Caco-2 (cell line): ENCODE measurements at regions of chr14 and their contacts with region 1.

Region 1: DNA sequence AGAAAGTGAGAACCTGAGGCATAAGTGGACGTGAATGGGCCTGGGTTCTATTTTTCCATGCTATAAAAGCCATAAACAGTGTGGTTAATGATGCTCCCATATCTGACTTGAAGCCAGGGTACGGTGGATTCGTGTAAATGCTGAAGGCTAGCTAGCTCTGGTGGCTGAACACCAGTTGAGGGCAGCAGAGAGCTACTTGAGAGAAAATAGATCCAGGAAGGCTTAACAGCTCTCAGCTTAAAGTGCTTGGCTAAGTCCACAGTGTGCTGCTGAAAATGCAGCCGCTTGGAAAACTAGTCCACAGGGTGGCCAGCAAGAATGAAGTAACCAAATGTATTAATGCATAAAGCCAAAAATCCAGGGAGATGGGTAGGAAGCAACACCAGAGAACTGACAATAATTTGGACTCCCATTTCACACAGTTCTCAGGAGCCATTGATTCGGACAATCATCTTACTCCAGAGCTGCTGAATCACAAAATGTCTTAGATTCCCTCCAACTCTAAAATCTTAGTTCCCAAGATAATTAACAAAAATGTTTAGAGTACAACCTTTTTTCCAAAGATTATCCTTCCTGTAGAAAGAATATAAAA is 15.0 kb upstream of the FOXG1 start:
- DNase-seq: peak; percentile 49 to 55
- H3K4me3 ChIP-seq: no peak overlapping the region
- H3K4me3 Mint-ChIP-seq: no peak overlapping the region
- H3K27ac Mint-ChIP-seq: no peak overlapping the region
- H3K4me1 ChIP-seq: no peaks in the 10 kb centered on the region
- H3K4me1 Mint-ChIP-seq: no peaks in the 10 kb centered on the region
- H3K27me3 ChIP-seq: no peaks in the 10 kb centered on the region
- H3K27me3 Mint-ChIP-seq: peaks cover 14% of the 10 kb centered on the region
- CTCF ChIP-seq: peak; percentile 57 to 74

Region 2: GRCh38 chr14:28707814-28708213 is 43.7 kb before region 1 on chr14:
- CTCF ChIA-PET with region 1: no interaction called
- POLR2A ChIA-PET with region 1: no interaction called
- intact Hi-C with region 1: no loop called
- DNase-seq: no peak
- H3K4me3 ChIP-seq: no peak overlapping the region
- H3K4me3 Mint-ChIP-seq: no peak overlapping the region
- H3K27ac Mint-ChIP-seq: no peak overlapping the region
- H3K4me1 ChIP-seq: no peaks in the 10 kb centered on the region
- H3K4me1 Mint-ChIP-seq: no peaks in the 10 kb centered on the region
- H3K27me3 ChIP-seq: no peaks in the 10 kb centered on the region
- H3K27me3 Mint-ChIP-seq: no peaks in the 10 kb centered on the region
- CTCF ChIP-seq: no peak

Region 3: DNA sequence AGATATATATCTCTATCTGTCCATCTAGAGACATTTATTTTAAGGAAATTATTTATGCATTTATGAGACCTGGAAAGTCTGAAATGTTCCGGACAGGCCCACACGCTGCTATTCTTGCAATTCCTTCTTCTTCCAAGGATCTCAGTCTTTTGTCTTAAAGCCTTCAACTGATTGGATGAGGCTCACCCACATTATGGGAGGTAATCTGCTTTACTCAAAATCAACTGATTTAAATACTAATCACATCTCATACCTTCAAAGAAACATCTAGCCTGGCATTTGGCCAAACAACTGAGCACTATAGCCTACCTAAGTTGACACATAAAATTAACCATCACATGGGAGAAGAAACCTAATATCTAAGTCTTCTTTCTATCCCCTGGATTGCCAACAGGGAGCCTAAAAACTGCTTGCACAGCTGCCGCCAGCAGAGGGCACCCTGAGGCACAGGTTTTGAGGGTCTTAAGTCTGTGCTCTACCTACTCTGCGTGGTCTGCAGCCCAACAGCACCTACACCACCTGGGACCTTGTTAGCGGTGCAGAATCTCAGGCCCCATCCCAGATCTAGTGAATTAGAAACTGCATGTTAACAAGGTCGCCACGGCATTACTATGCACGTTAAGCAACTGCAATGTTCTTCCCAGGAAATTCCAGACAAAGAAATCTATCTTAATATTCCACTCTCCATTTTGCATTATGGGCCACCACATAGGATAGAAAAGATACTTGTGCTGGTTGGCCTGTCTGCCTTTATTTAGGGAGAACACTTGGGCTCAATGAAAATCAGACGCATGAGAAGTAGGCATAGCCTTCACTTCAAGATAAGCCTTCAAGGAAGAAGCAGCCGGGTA is 264.7 kb after region 1 on chr14:
- CTCF ChIA-PET with region 1: no interaction called
- POLR2A ChIA-PET with region 1: no interaction called
- intact Hi-C with region 1: loop called (anchors 10 kb)
- DNase-seq: peak; percentile 43 to 53
- H3K4me3 ChIP-seq: no peak overlapping the region
- H3K4me3 Mint-ChIP-seq: no peak overlapping the region
- H3K27ac Mint-ChIP-seq: no peak overlapping the region
- H3K4me1 ChIP-seq: no peaks in the 10 kb centered on the region
- H3K4me1 Mint-ChIP-seq: no peaks in the 10 kb centered on the region
- H3K27me3 ChIP-seq: no peaks in the 10 kb centered on the region
- H3K27me3 Mint-ChIP-seq: peaks cover under 1% of the 10 kb centered on the region
- CTCF ChIP-seq: peak; percentile 50 to 67

Region 4: GRCh38 chr14:29518335-29518734 is 766.8 kb after region 1 on chr14:
- CTCF ChIA-PET with region 1: no interaction called
- POLR2A ChIA-PET with region 1: no interaction called
- intact Hi-C with region 1: loop called (anchors 5 kb)
- DNase-seq: no peak
- H3K4me3 ChIP-seq: no peak overlapping the region
- H3K4me3 Mint-ChIP-seq: no peak overlapping the region
- H3K27ac Mint-ChIP-seq: no peak overlapping the region
- H3K4me1 ChIP-seq: no peaks in the 10 kb centered on the region
- H3K4me1 Mint-ChIP-seq: no peaks in the 10 kb centered on the region
- H3K27me3 ChIP-seq: no peaks in the 10 kb centered on the region
- H3K27me3 Mint-ChIP-seq: peaks cover 4% of the 10 kb centered on the region
- CTCF ChIP-seq: no peak

Region 5: GRCh38 chr14:30005114-30005808 is 1253.7 kb after region 1 on chr14:
- CTCF ChIA-PET with region 1: no interaction called
- POLR2A ChIA-PET with region 1: no interaction called
- intact Hi-C with region 1: loop called (anchors 1 kb)
- DNase-seq: peak in 1 of 2 experiments; percentile 20
- H3K4me3 ChIP-seq: no peak overlapping the region
- H3K4me3 Mint-ChIP-seq: no peak overlapping the region
- H3K27ac Mint-ChIP-seq: no peak overlapping the region
- H3K4me1 ChIP-seq: no peaks in the 10 kb centered on the region
- H3K4me1 Mint-ChIP-seq: no peaks in the 10 kb centered on the region
- H3K27me3 ChIP-seq: no peaks in the 10 kb centered on the region
- H3K27me3 Mint-ChIP-seq: peaks cover 9% of the 10 kb centered on the region
- CTCF ChIP-seq: peak; percentile 56 to 58

Region 6: DNA sequence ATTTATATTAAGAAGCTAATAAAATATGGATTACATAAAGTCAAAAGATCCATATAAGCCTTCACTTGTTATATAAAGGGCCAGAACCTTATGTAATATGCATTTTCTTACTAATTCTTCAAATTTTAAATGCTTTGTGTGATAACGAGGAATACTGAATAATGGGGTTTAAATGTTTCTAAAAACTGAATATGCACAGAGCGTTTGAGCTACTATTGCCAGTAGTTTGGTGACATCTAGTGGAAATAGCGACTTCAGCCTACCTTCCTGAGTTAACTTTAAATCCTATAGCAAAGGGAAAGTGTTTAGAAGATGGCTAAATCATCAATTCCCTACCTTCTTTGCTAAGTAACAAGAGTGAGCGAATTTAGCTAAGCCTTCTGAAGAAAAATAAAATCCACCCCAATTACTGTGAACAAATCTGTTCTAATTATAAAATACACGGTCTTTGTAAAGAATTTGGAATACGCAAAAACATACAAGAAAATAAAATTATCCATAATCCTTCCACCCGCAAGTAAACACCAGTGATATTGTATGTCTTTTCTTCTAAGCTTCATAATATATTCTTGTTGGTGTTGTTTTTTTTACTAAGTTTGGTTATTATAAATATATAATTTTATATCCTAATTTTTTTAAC is 1691.9 kb after region 1 on chr14:
- CTCF ChIA-PET with region 1: no interaction called
- POLR2A ChIA-PET with region 1: no interaction called
- intact Hi-C with region 1: loop called (anchors 5 kb)
- DNase-seq: peak in 1 of 2 experiments; percentile 27
- H3K4me3 ChIP-seq: no peak overlapping the region
- H3K4me3 Mint-ChIP-seq: no peak overlapping the region
- H3K27ac Mint-ChIP-seq: no peak overlapping the region
- H3K4me1 ChIP-seq: no peaks in the 10 kb centered on the region
- H3K4me1 Mint-ChIP-seq: no peaks in the 10 kb centered on the region
- H3K27me3 ChIP-seq: no peaks in the 10 kb centered on the region
- H3K27me3 Mint-ChIP-seq: no peaks in the 10 kb centered on the region
- CTCF ChIP-seq: peak; percentile 58 to 65